ENCODE measurements at regions of chr2 and their contacts with region 1.

Region 1: GRCh38 chr2:233498126-233498525 is 68.5 kb downstream of the USP40 start:
- DNase-seq: no peak
- ATAC-seq: peak; percentile 67
- H3K4me3 Mint-ChIP-seq: peak overlapping the region; percentile 35
- H3K27ac Mint-ChIP-seq: peak overlapping the region; percentile 56
- H3K4me1 Mint-ChIP-seq: peaks cover 12% of the 10 kb centered on the region
- H3K27me3 Mint-ChIP-seq: no peaks in the 10 kb centered on the region
- CTCF ChIP-seq: no peak

Region 2: DNA sequence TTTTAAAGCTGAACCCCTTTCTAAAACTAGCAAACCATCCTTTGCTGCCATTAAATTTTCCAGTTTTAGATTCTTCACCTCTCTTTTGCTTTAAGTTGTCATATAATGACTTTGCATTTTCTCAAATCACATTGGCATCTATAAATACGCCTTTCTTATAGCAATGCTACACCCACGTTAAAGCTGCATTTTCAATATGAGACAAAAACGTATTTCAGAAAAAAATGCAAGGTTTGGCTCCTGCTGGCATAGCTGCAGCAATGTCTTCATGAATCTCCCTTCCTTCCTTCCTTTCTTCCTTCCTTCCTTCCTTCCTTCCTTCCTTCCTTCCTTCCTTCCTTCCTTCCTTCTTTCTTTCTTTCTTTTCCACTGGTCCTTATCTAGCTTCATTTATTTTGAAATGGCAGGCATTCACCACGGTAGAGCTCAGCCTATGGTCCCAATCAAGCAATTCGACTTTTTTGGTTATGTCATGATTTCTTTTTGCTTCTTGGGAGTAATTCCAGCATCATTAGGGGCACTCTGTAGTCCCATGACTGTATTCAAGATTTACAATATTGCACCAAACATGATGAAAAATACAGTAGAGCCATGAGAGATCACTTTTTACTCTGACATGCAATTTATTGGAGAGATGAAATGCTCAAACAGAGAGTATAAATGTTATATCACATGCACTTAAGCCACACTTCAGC is 129.4 kb after region 1 on chr2:
- CTCF ChIA-PET with region 1: no interaction called
- POLR2A ChIA-PET with region 1: interaction called, 11 read pairs
- intact Hi-C with region 1: no loop called
- DNase-seq: no peak
- ATAC-seq: no peak
- H3K4me3 Mint-ChIP-seq: no peak overlapping the region
- H3K27ac Mint-ChIP-seq: no peak overlapping the region
- H3K4me1 Mint-ChIP-seq: no peaks in the 10 kb centered on the region
- H3K27me3 Mint-ChIP-seq: peaks cover 30% of the 10 kb centered on the region
- CTCF ChIP-seq: no peak

Region 3: DNA sequence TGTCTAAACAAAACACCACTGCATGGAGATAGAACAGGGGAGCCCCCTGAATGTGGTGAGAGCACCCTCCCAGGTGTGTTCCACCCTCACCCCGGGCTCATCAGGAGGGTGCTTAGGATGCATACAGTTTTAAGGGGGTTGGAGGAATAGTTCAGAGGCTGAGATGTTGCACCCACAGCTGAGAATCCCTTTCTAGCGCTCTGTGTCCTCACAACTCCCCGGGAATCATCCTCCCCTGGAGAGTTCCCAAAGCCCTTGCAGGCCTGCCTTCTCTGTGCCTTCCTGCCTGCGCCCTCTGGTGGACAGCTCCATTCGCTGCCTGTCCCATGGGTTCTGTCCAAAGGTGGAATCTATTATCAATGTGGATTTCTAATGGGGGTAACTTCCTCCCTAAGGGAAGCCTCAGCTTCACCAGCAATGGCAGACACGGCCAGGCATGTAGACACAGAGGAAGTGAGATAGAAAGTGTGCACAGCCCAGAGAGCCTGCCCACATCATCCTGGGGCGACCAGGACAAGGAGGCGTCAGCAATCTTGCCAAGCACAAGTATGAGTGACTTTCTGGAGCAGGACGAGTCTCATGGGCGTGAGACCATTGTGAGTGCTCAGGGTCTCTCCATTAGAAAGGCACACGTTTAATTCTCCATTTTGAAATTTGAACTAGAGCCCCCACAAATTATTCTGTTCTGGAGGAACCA is 213.3 kb after region 1 on chr2:
- CTCF ChIA-PET with region 1: no interaction called
- POLR2A ChIA-PET with region 1: no interaction called
- intact Hi-C with region 1: loop called (anchors 5 kb)
- DNase-seq: peak; percentile 55
- ATAC-seq: peak; percentile 66
- H3K4me3 Mint-ChIP-seq: no peak overlapping the region
- H3K27ac Mint-ChIP-seq: no peak overlapping the region
- H3K4me1 Mint-ChIP-seq: peaks cover 4% of the 10 kb centered on the region
- H3K27me3 Mint-ChIP-seq: peaks cover 32% of the 10 kb centered on the region
- CTCF ChIP-seq: peak; percentile 75

Region 4: DNA sequence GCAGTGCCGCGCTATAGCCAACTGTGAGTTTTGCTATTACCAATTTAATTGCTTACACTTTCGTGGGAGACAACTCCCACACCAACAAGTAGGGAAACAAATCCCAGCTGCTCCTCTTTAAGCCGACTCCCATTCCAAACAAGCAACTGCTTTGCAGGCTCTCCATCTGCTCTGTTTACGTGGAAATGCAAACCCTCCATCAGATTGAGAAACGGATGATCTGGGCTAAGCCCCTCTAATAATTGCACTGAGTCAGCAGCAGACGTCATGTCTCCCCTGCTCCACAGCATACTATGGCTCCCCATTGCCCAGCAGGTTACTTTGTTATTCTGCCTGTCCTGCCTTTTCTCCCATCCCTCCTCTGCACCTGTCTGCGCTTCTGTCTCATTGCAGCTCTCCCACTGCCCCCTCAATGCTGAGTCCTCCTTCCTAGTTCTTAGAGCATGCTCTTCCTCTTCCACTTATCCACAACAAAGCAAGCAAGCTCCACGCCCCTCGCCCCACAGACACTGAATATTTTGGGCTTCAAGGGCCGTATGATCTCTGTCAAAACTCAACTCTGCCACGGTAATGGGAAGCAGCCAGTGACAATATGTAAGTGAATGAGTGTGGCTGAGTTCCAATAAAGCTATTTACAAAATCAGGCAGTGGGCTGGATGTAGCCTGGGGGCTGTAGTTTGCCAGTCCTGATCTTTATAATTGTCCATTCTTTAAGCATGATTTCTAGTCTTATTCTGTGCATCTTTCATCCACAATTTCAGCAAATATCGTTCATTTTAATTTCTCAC is 1038.2 kb after region 1 on chr2:
- CTCF ChIA-PET with region 1: no interaction called
- POLR2A ChIA-PET with region 1: no interaction called
- intact Hi-C with region 1: no loop called
- DNase-seq: no peak
- ATAC-seq: no peak
- H3K4me3 Mint-ChIP-seq: no peak overlapping the region
- H3K27ac Mint-ChIP-seq: no peak overlapping the region
- H3K4me1 Mint-ChIP-seq: no peaks in the 10 kb centered on the region
- H3K27me3 Mint-ChIP-seq: peaks cover 16% of the 10 kb centered on the region
- CTCF ChIP-seq: no peak

Measured in activated B cell treated with CpG ODN at 0.5 μM for 24 hours (primary cell).